ENCODE measurements at regions of chr1 and their contacts with region 1.

Region 1: GRCh38 chr1:117895482-117896114 is 33.8 kb downstream of the GDAP2 start:
- DNase-seq: peak; percentile 61 to 82 (median 74)
- H3K4me3 ChIP-seq: no peak overlapping the region
- H3K27ac ChIP-seq: no peak overlapping the region
- H3K4me1 ChIP-seq: no peaks in the 10 kb centered on the region
- H3K27me3 ChIP-seq: no peaks in the 10 kb centered on the region

Region 2: DNA sequence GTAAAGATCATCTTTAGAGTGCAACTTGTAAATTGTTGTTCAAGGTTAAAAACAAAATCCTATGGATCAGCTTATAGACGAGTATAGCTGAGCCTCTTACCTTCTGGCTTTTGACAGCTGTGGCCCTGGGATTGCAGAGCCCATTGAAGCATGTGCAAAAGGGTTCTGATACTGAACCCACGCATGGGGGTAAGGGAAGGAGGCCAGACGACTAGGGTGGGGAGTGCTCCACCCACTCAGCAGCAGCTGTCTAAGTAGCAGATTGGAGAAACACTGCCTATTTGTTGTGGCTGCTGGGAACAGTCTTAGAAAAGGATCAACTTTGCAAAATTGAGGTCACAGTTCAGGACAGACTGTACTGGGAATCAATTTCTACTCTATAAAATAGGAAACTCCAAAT is 878.0 kb before region 1 on chr1:
- CTCF ChIA-PET with region 1: no interaction called
- POLR2A ChIA-PET with region 1: no interaction called
- DNase-seq: no peak
- H3K4me3 ChIP-seq: no peak overlapping the region
- H3K27ac ChIP-seq: no peak overlapping the region
- H3K4me1 ChIP-seq: no peaks in the 10 kb centered on the region
- H3K27me3 ChIP-seq: no peaks in the 10 kb centered on the region

Region 3: DNA sequence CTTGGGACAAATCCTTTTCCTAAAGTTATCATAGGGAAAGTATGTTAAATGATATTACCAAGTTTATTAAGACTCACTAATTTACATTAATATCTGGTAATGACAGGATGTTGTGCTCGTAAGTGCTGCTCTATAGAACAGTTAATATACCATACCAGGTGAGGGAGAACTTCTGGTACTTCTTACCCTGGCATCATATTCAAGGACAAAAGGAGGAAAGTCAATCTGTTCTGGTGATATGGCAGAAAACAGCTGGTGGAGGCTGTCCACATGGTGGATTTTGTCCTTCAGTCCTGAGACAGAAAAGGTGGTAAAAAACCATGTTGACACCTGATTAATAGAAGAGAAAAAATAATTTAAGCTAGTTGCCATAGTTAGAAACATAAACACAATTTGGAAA is 17.8 kb before region 1 on chr1:
- CTCF ChIA-PET with region 1: interaction called, 26 read pairs
- POLR2A ChIA-PET with region 1: no interaction called
- DNase-seq: no peak
- H3K4me3 ChIP-seq: no peak overlapping the region
- H3K27ac ChIP-seq: no peak overlapping the region
- H3K4me1 ChIP-seq: no peaks in the 10 kb centered on the region
- H3K27me3 ChIP-seq: no peaks in the 10 kb centered on the region

Region 4: GRCh38 chr1:117883620-117884019 is 12.0 kb before region 1 on chr1:
- CTCF ChIA-PET with region 1: interaction called, 26 read pairs
- POLR2A ChIA-PET with region 1: no interaction called
- DNase-seq: no peak
- H3K4me3 ChIP-seq: no peak overlapping the region
- H3K27ac ChIP-seq: no peak overlapping the region
- H3K4me1 ChIP-seq: no peaks in the 10 kb centered on the region
- H3K27me3 ChIP-seq: no peaks in the 10 kb centered on the region

Region 5: DNA sequence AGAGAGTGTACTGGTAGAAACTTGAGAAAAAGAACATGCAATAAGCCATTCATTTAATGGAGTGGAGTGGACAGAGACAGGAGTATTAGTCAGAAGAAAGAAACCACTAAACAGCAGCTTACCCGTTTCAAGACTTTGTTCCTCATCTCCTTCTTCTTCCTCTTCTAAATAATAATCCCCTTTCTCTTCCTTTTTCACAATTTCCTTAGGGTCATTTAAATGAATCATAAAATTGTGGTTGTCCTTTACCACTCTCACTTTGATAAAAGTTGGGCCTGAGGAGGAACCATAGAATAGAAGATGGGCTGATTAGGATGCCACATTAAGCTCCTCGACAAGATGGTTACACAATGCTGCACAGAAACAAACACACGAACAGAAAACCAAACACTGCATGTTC is 143.6 kb after region 1 on chr1:
- CTCF ChIA-PET with region 1: no interaction called
- POLR2A ChIA-PET with region 1: no interaction called
- DNase-seq: peak in 2 of 3 donors; percentile 1 to 10
- H3K4me3 ChIP-seq: no peak overlapping the region
- H3K27ac ChIP-seq: no peak overlapping the region
- H3K4me1 ChIP-seq: peaks cover 0 to 4% (median 0%) of the 10 kb centered on the region in 4 experiments
- H3K27me3 ChIP-seq: no peaks in the 10 kb centered on the region